Calu3 (cell line): ENCODE measurements at regions of chr6 and their contacts with region 1.

Region 1: DNA sequence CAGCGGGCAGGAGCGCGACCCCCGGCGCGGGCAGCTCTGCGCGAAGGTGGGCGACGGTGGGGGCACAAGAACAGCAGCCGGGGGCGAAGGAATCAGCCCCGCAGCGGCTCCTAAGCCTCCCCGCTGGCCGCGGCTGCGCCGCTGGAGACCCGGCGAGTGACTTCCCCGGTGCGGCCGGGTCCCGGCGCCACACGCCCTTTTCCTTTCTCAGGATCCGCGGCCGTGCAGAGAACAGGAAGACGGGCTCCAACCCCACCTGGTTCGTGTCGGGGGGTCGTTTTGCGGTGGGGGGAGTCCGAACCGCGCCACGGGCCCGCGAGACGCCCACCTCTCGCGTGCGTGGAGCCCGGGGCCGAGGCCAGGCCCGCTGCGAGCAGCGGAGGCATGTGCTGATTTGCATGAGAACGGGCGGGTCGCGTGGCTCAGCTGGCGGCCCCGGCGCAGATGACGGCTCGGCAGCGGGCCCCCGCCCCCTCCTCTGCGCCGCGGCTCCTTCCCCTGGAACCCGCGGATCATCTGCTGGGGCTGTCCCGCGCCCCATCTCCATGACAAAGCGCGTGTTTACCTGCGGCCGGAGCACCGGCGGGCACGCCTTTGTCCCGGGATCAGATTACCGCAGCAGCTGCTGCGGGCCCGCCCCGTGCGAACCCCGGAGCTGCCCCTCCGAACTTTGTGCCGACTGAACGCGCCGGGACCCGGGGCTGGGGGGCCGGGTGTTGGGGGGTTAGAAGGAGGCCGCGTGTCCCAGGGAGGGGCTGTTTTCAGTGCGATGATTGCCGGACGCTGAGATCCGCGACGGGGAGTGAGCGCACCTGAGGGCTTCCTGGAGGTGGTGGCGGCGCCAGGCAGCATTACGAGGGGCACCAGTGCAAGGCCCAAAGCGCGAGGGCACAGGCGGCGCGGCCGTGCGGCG is 4.9 kb upstream of the DLL1 start:
- DNase-seq: no peak
- H3K4me3 Mint-ChIP-seq: peak overlapping the region; percentile 62
- H3K27ac Mint-ChIP-seq: no peak overlapping the region
- H3K4me1 Mint-ChIP-seq: peaks cover 10% of the 10 kb centered on the region
- H3K27me3 Mint-ChIP-seq: peaks cover 84% of the 10 kb centered on the region
- CTCF ChIP-seq: no peak

Region 2: DNA sequence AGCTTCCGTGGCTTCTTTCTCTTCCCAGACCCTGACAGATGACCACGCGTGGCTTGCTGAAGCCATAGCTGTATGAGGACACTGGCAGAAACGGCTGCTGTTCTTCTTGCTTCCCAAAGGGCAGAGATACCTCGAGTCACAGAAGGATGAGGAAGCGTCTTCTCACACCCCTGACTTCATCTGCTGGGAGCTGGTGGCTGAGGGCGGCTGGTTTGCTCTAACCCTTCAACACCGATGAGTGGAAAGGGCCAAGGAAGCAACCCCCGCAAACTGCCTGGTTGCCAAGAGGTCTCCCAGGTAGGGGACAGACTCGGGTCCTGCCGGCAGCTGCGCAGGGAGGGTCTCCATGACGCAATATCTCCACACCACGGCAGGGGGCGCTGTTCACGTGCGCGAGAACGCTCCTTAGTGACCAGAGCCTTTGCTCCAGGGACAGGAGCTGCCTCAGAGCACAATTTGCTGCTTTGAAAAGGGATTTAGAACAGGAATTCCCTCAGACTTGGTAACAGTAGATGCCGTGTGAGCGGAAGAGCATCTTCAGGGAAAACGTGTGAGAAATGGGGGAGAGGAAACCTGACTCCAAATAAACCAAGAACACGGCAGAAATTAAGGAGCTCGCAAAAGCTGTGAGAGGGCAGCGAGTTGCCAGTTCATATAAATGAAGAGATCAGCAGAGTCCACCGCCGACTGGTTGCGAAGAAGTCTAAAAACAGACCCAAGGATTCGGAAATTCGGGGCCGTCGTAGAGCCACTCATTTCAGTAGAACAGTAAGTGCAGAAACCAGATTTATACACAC is 464.1 kb before region 1 on chr6:
- CTCF ChIA-PET with region 1: interaction called, 10 read pairs
- intact Hi-C with region 1: loop called (anchors 5 kb)
- DNase-seq: peak; percentile 78
- H3K4me3 Mint-ChIP-seq: peak overlapping the region; percentile 70
- H3K27ac Mint-ChIP-seq: peak overlapping the region; percentile 48
- H3K4me1 Mint-ChIP-seq: peaks cover 21% of the 10 kb centered on the region
- H3K27me3 Mint-ChIP-seq: peaks cover 27% of the 10 kb centered on the region
- CTCF ChIP-seq: peak; percentile 71

Region 3: DNA sequence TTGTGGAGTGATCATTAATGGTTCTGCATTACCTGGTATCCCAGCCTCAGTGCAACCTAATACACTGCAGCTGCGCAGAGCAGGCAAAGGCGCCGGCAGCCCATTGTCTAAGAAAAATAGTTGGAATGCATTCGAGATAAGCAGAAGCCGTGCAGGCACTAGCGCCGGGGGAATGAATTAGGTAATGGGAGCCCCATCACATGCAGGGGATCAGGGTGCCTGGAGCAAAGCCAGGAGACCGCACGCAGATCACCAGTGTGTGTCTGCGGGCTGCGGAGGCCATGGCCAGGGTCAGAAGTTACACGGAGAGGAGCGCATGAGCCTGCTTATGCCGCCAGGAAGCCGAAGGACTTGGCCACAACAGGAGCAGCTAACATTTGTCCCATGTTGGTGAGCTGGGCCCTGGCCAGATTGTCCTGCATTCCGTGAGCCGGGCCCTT is 161.7 kb before region 1 on chr6:
- CTCF ChIA-PET with region 1: no interaction called
- intact Hi-C with region 1: no loop called
- DNase-seq: no peak
- H3K4me3 Mint-ChIP-seq: no peak overlapping the region
- H3K27ac Mint-ChIP-seq: no peak overlapping the region
- H3K4me1 Mint-ChIP-seq: no peaks in the 10 kb centered on the region
- H3K27me3 Mint-ChIP-seq: no peaks in the 10 kb centered on the region
- CTCF ChIP-seq: no peak

Region 4: GRCh38 chr6:170529839-170530469 is 234.2 kb after region 1 on chr6:
- CTCF ChIA-PET with region 1: no interaction called
- intact Hi-C with region 1: loop called (anchors 10 kb)
- DNase-seq: peak; percentile 58
- H3K4me3 Mint-ChIP-seq: no peak overlapping the region
- H3K27ac Mint-ChIP-seq: no peak overlapping the region
- H3K4me1 Mint-ChIP-seq: no peaks in the 10 kb centered on the region
- H3K27me3 Mint-ChIP-seq: no peaks in the 10 kb centered on the region
- CTCF ChIP-seq: peak; percentile 48